Body of pancreas (tissue), 4 donors: ENCODE measurements at regions of chr6 and their contacts with region 1.

Region 1: GRCh38 chr6:125765944-125766343 is 16.5 kb downstream of the HEY2 start:
- DNase-seq: no peak
- ATAC-seq: no peak
- H3K4me3 ChIP-seq: no peak overlapping the region
- H3K27ac ChIP-seq: no peak overlapping the region
- H3K4me1 ChIP-seq: no peaks in the 10 kb centered on the region
- H3K27me3 ChIP-seq: no peaks in the 10 kb centered on the region
- CTCF ChIP-seq: no peak
- POLR2A ChIP-seq: no peak

Region 2: GRCh38 chr6:125314019-125314581 is 451.8 kb before region 1 on chr6:
- intact Hi-C with region 1: loop called (anchors 5 kb)
- DNase-seq: peak; percentile 57 to 75 (median 70)
- ATAC-seq: peak; percentile 78
- H3K4me3 ChIP-seq: no peak overlapping the region
- H3K27ac ChIP-seq: no peak overlapping the region
- H3K4me1 ChIP-seq: no peaks in the 10 kb centered on the region
- H3K27me3 ChIP-seq: no peaks in the 10 kb centered on the region
- CTCF ChIP-seq: peak; percentile 40 to 88 (median 70)
- POLR2A ChIP-seq: no peak